ENCODE measurements at regions of chr1 and their contacts with region 1.

Region 1: GRCh38 chr1:27556781-27557595 is 47.0 kb downstream of the AHDC1 start:
- H3K4me3 ChIP-seq: peak overlapping the region; percentile 10
- H3K27ac ChIP-seq: no peak overlapping the region
- H3K4me1 ChIP-seq: no peaks in the 10 kb centered on the region
- CTCF ChIP-seq: peak; percentile 85

Region 2: GRCh38 chr1:27489910-27490741 is 66.9 kb before region 1 on chr1 and contains the start of gene WASF2:
- CTCF ChIA-PET with region 1: interaction called, 11 read pairs
- POLR2A ChIA-PET with region 1: interaction called, 10 read pairs
- H3K4me3 ChIP-seq: peak within 1 kb of the TSS; percentile 86
- H3K27ac ChIP-seq: peak within 1 kb of the TSS; percentile 81
- H3K4me1 ChIP-seq: peaks cover 3% of the 10 kb centered on the region; the same call in 1 of the 2 replicates
- CTCF ChIP-seq: peak; percentile 54; the same call in 1 of the 2 replicates

Region 3: DNA sequence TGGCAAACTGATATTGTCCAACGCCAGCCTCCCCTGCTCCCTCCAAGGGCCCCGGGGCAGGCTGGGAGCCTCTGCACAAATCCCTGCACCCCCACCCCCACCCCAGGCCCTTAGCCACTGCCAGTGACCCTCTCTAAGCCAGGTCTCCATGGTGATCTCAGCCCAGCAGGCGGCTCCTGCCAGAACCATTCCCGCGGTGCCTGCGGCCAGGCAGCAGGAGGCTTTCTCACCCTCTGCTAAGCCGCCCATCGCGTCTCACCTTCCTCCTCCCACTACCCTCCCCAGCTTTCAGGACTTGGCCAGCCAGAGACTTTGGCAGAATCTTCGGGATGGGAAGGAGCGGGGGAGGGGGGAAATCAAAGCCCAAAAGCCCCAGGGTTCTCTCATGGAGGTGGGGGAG is 20.2 kb before region 1 on chr1:
- CTCF ChIA-PET with region 1: interaction called, 22 read pairs
- POLR2A ChIA-PET with region 1: interaction called, 5 read pairs
- H3K4me3 ChIP-seq: no peak overlapping the region
- H3K27ac ChIP-seq: no peak overlapping the region
- H3K4me1 ChIP-seq: peaks cover 7% of the 10 kb centered on the region
- CTCF ChIP-seq: no peak

Region 4: GRCh38 chr1:27568300-27569087 is 11.5 kb after region 1 on chr1:
- CTCF ChIA-PET with region 1: interaction called, 111 read pairs
- POLR2A ChIA-PET with region 1: interaction called, 10 read pairs
- H3K4me3 ChIP-seq: peak overlapping the region; percentile 22
- H3K27ac ChIP-seq: no peak overlapping the region
- H3K4me1 ChIP-seq: peaks cover 8% of the 10 kb centered on the region; the same call in 1 of the 2 replicates
- CTCF ChIP-seq: peak; percentile 86

Region 5: DNA sequence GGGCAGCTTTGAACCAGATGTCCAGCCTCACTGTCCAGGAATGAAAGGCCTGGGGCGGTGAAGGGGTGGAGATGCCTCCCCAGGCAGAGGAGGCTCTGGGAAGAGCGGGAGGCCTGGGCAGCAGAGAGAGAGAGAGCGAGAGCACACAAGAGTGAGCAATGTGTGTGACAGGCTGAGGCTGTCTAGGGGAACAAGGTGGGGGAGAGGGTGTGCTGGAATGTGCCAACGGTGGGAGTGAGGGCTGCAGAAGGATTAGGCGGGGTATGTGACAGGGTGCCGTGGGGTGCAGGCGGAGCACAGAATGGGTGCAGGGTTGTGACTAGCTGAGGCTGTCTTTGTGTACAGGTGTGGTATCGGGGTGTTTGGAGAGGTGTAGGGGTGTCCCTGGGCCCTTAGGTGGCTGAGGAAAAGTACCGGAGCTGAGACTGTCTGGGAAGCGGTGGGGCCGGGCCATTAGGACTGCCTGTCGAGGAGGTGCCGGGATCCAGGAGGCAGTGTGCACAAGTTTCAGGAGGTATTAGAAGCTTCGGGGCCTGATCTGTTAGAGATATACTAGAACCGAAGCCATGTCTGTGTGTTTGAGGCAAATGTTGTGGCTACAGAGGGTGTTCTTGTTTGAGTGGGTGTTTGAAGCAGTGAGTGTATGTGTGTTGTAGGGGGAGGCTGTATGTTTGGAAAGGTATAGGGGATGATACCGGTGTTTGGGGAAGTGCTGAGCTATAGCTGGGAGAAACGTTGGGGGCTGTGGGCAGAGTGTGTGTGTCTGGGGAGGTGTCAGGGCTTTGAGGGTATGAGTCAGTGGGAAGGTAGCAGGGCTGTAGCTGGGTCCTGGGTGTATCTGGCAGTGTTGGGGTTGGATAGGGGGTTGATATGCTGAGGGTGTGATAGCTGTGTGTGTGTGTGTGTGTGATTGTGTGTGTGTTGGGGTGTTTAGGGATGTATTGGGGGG is 37.8 kb after region 1 on chr1:
- CTCF ChIA-PET with region 1: interaction called, 29 read pairs
- POLR2A ChIA-PET with region 1: interaction called, 21 read pairs
- H3K4me3 ChIP-seq: no peak overlapping the region
- H3K27ac ChIP-seq: no peak overlapping the region
- H3K4me1 ChIP-seq: peaks cover 26% of the 10 kb centered on the region
- CTCF ChIP-seq: no peak

Region 6: GRCh38 chr1:27959400-27960217 is 402.6 kb after region 1 on chr1 and contains the start of gene XKR8:
- CTCF ChIA-PET with region 1: no interaction called
- POLR2A ChIA-PET with region 1: no interaction called
- H3K4me3 ChIP-seq: peak within 1 kb of the TSS; percentile 77
- H3K27ac ChIP-seq: peak within 1 kb of the TSS; percentile 75
- H3K4me1 ChIP-seq: no peaks in the 10 kb centered on the region
- CTCF ChIP-seq: peak; percentile 95